Dendritic cell treated with granulocyte-macrophage colony-stimulating factor and Interleukin-4, amounts not matched to agents 40 ng/mL and 50 ng/mL, for 4 days (primary cell): ENCODE measurements at regions of chr1 and their contacts with region 1.

Region 1: DNA sequence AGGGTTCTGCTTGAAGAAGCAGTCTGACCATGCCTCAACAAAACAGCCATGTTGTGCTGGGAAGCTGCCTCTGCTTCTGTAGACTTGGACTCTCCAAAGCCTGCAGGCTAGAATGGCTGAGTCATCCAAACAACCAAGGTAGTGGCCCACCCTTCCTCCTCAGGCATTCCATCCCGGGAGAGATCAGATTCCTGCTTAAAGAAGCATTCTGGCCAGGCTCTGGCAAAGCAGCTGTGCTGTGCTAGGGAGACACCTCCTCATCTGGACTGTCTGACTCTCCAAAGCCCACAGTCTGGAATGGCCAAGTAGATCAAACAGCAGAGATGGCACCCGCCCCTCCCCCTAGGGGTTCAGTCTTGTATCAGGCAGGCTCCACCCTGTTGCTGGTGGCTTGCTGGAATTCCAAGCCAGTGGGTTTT is 38.3 kb upstream of the F3 start:
- H3K4me3 Mint-ChIP-seq: no peak overlapping the region
- H3K27ac Mint-ChIP-seq: no peak overlapping the region
- H3K4me1 Mint-ChIP-seq: peaks cover 7% of the 10 kb centered on the region
- H3K27me3 Mint-ChIP-seq: peaks cover 1% of the 10 kb centered on the region

Region 2: GRCh38 chr1:94562519-94563260 is 17.2 kb before region 1 on chr1:
- intact Hi-C with region 1: loop called (anchors 2 kb)
- H3K4me3 Mint-ChIP-seq: no peak overlapping the region
- H3K27ac Mint-ChIP-seq: no peak overlapping the region
- H3K4me1 Mint-ChIP-seq: no peaks in the 10 kb centered on the region
- H3K27me3 Mint-ChIP-seq: no peaks in the 10 kb centered on the region

Region 3: DNA sequence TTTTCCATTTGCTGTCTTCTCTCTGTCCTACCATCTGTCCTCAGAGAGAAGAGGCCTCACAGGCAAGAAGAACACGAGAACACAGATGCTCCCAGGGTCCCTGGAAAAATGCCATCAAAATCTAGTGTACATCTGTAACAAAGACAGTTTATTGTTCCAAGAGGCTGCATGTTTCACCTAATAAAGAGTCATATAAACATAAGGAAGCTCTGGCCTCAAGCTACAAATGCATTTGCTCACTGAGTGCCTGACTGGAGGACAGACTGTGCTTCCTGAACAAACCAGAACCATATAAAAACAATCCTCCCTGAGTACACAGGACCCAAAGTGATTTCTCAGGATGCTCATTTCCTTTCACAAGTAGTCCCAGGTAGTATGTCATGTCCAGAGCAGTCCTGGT is 164.0 kb after region 1 on chr1:
- intact Hi-C with region 1: no loop called
- H3K4me3 Mint-ChIP-seq: no peak overlapping the region
- H3K27ac Mint-ChIP-seq: no peak overlapping the region
- H3K4me1 Mint-ChIP-seq: peaks cover 55% of the 10 kb centered on the region
- H3K27me3 Mint-ChIP-seq: no peaks in the 10 kb centered on the region

Region 4: DNA sequence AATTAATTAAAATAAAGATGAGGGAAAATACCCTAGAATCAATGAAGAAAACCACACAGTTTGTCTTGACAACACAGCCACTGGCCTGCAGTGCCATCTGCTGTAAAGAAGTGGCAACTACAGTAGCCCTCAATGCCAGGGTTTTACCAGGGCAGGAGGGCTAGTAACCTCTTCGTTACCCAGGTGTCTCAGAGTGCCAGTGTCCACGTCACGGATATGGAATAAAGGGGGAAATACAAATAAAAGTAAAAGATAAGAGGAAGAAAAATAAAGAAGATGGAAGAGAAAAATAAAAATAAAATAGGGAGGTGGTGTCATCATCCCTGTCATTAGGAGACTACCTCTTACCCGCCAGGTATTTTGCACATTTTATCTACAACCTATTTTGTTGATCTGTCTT is 226.0 kb after region 1 on chr1:
- intact Hi-C with region 1: no loop called
- H3K4me3 Mint-ChIP-seq: no peak overlapping the region
- H3K27ac Mint-ChIP-seq: no peak overlapping the region
- H3K4me1 Mint-ChIP-seq: peaks cover 27% of the 10 kb centered on the region
- H3K27me3 Mint-ChIP-seq: no peaks in the 10 kb centered on the region